Spleen (tissue), 13 donors: ENCODE measurements at regions of chrX and their contacts with region 1.

Region 1: GRCh38 chrX:13750204-13750603 is 15.7 kb downstream of the OFD1 start:
- DNase-seq: no peak
- H3K4me3 ChIP-seq: no peak overlapping the region
- H3K27ac ChIP-seq: peak overlapping the region in 4 of 8 donors; percentile 25 to 36 (median 32)
- H3K4me1 ChIP-seq: peaks cover 5 to 54% (median 21%) of the 10 kb centered on the region in 6 donors
- H3K27me3 ChIP-seq: no peaks in the 10 kb centered on the region
- CTCF ChIP-seq: peak in 10 of 11 experiments; percentile 34 to 60 (median 48)
- POLR2A ChIP-seq: no peak

Region 2: GRCh38 chrX:13653022-13653693 is 97.0 kb before region 1 on chrX and contains the start of gene TCEANC:
- intact Hi-C with region 1: loop called (anchors 10 kb)
- DNase-seq: peak; percentile 99
- H3K4me3 ChIP-seq: peak within 1 kb of the TSS; percentile 49 to 81 (median 52)
- H3K27ac ChIP-seq: peak within 1 kb of the TSS; percentile 82 to 98 (median 96)
- H3K4me1 ChIP-seq: peaks cover 9 to 31% (median 15%) of the 10 kb centered on the region in 6 donors
- H3K27me3 ChIP-seq: no peaks in the 10 kb centered on the region
- CTCF ChIP-seq: peak in 2 of 11 experiments; percentile 9 to 36
- POLR2A ChIP-seq: peak; percentile 57 to 63 (median 59)
- total RNA-seq, gene TCEANC: 7.0 to 11.6 (median 8.8) TPM